WTC11 (cell line): ENCODE measurements at regions of chr16 and their contacts with region 1.

Region 1: DNA sequence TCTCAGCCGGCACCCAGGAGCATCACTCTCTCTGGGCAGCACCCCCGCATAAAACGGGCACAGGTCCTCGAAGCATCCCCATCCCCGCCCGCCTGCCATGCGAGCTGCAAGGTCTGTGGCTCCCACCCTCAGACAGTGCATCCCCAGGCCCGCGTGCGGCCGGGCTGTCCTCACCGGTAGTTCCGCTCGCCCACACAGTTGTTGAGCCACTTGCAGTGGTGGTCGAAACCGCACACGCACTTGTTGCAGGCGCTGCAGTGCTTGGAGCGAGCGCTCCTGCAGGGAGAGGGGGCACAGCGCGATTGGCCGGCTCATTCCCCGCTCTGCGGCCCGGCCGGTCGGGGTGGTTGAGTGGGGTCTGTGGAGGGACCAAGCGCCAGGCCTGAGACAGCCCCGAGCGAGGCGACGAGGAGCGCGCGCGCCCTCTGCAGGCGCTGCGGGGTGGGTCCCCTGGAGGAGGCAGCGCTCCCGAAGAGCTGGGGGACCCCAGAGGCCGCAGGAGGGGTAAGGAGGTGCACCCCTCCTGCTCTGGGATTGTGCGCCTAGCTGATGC is 6.0 kb upstream of the TPPP3 start:
- DNase-seq: peak; percentile 90
- ATAC-seq: peak; percentile 83
- H3K4me3 Mint-ChIP-seq: no peak overlapping the region
- H3K27ac Mint-ChIP-seq: no peak overlapping the region
- H3K4me1 Mint-ChIP-seq: peaks cover 26% of the 10 kb centered on the region
- H3K27me3 Mint-ChIP-seq: peaks cover 44% of the 10 kb centered on the region
- CTCF ChIP-seq: peak; percentile 80; the same call in 1 of the 2 replicates

Region 2: GRCh38 chr16:67260426-67261075 is 138.7 kb before region 1 on chr16:
- CTCF ChIA-PET with region 1: interaction called, 33 read pairs
- POLR2A ChIA-PET with region 1: no interaction called
- DNase-seq: no peak
- ATAC-seq: peak; percentile 67
- H3K4me3 Mint-ChIP-seq: no peak overlapping the region
- H3K27ac Mint-ChIP-seq: no peak overlapping the region
- H3K4me1 Mint-ChIP-seq: peaks cover 4% of the 10 kb centered on the region; the same call in 1 of the 2 replicates
- H3K27me3 Mint-ChIP-seq: no peaks in the 10 kb centered on the region
- CTCF ChIP-seq: no peak

Region 3: GRCh38 chr16:67326472-67327309 is 72.6 kb before region 1 on chr16 and contains the starts of genes KCTD19 and LRRC36:
- CTCF ChIA-PET with region 1: interaction called, 74 read pairs
- POLR2A ChIA-PET with region 1: interaction called, 3 read pairs
- DNase-seq: peak; percentile 98
- ATAC-seq: peak; percentile 99
- H3K4me3 Mint-ChIP-seq: peak within 1 kb of the TSS; percentile 83
- H3K27ac Mint-ChIP-seq: no peak within 1 kb of the TSS
- H3K4me1 Mint-ChIP-seq: peaks cover 3% of the 10 kb centered on the region
- H3K27me3 Mint-ChIP-seq: peaks cover 56% of the 10 kb centered on the region
- CTCF ChIP-seq: peak; percentile 49
- total RNA-seq, gene KCTD19: 0.85 to 1.1 TPM (median 0.85 TPM) in 3 replicates
- total RNA-seq, gene LRRC36: 0.13 to 0.39 TPM (median 0.18 TPM) in 3 replicates

Region 4: DNA sequence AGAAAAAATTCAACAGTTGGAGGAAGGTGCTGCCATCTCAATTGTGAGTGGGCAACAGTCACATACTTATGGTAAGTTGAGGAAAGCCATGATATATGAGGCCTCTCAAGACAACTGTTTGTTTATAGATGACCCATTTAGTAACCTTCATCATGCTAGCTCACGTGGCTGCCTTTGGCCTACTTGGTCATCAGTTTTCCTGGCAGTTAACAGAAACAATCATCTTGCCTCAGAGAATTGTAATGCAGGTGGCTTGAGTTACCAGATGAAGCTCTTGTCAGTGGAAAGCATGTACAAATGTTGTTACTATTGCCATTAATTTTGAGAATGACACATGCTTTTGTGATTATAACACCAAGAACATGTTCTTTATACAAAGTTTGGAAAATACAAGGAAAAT is 20.6 kb before region 1 on chr16:
- CTCF ChIA-PET with region 1: interaction called, 27 read pairs
- POLR2A ChIA-PET with region 1: no interaction called
- DNase-seq: no peak
- ATAC-seq: no peak
- H3K4me3 Mint-ChIP-seq: no peak overlapping the region
- H3K27ac Mint-ChIP-seq: no peak overlapping the region
- H3K4me1 Mint-ChIP-seq: no peaks in the 10 kb centered on the region; the same call in 1 of the 2 replicates
- H3K27me3 Mint-ChIP-seq: peaks cover 16% of the 10 kb centered on the region
- CTCF ChIP-seq: no peak

Region 5: DNA sequence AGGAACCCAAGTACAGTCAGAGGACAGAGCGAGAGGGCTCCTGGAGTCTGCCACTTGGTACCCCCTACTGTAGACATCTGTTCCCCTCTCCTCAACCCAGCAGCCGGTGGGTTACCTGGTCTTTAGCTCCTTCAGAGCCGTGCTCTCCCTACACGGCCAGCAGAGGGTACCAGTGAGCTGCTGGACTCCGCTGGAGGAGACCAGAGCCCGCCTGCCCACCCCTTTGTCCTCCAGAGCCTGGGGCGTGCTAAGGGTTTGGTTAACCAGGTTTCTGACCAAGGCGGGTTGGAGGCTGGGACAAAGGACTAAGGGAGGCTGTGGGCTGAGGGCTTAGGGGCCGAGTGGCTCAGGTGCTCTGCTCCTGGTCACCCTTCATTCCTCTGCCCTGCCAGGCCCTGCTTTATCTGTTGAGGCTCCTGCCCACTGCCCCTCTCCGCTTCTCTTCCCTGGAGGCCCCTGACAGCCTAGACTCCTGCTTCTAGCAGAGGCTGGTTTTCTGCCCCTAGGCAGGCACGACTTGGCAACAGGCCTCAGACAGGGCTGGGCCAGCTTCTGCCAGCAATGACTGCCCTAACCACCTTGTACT is 29.0 kb after region 1 on chr16:
- CTCF ChIA-PET with region 1: interaction called, 103 read pairs
- POLR2A ChIA-PET with region 1: no interaction called
- DNase-seq: peak; percentile 91
- ATAC-seq: peak; percentile 67
- H3K4me3 Mint-ChIP-seq: no peak overlapping the region
- H3K27ac Mint-ChIP-seq: no peak overlapping the region
- H3K4me1 Mint-ChIP-seq: peaks cover 77% of the 10 kb centered on the region
- H3K27me3 Mint-ChIP-seq: peaks cover 12% of the 10 kb centered on the region
- CTCF ChIP-seq: peak; percentile 80

Region 6: DNA sequence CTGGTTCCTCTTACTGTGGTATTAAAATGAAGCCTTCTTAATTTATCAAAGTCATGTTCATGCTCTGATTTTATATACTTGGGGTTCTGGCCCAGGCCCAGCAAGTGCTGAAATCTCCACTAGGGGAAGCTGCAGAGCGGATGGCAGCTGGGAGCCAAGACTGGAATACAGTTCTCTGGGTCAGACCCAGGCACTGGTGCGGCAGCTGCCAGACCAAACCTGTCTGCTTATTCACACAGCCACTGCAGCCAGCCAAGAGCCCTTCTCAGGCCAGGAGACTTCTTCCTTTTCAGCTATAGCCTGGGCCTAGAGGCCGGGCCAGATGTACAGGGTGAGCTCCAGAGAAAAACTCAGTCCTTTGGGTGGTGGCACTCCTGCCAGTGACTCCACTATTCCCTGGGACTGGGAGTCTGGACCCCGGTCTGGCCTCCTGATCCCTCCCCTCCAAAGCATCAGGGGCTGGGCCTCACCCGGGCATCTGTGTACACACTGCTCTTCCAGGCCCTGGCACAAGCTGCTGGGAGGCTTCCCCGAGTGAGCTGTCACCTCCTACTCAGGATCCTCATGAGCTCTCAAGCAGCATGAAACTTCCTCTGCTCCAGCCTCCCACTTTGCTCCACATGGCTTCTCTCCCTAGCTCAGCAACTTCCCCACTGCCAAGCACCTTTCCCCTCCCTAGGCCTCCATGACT is 57.3 kb after region 1 on chr16:
- CTCF ChIA-PET with region 1: interaction called, 10 read pairs
- POLR2A ChIA-PET with region 1: no interaction called
- DNase-seq: peak; percentile 61
- ATAC-seq: peak; percentile 83
- H3K4me3 Mint-ChIP-seq: no peak overlapping the region
- H3K27ac Mint-ChIP-seq: peak overlapping the region; percentile 46; the same call in 1 of the 2 replicates
- H3K4me1 Mint-ChIP-seq: 0 out of 2 replicates have a peak, but pooled peaks cover 5% of the 10 kb centered on the region
- H3K27me3 Mint-ChIP-seq: no peaks in the 10 kb centered on the region
- CTCF ChIP-seq: peak; percentile 44

Region 7: GRCh38 chr16:67480833-67481560 is 81.7 kb after region 1 on chr16 and contains the start of gene ATP6V0D1:
- CTCF ChIA-PET with region 1: interaction called, 10 read pairs
- POLR2A ChIA-PET with region 1: no interaction called
- DNase-seq: peak; percentile 99
- ATAC-seq: peak; percentile 95
- H3K4me3 Mint-ChIP-seq: peak within 1 kb of the TSS; percentile 98
- H3K27ac Mint-ChIP-seq: peak within 1 kb of the TSS; percentile 97
- H3K4me1 Mint-ChIP-seq: peaks cover 5% of the 10 kb centered on the region
- H3K27me3 Mint-ChIP-seq: peaks cover 36% of the 10 kb centered on the region
- CTCF ChIP-seq: peak; percentile 49; the same call in 1 of the 2 replicates
- total RNA-seq, gene ATP6V0D1: 32.5 to 44.1 TPM (median 33.8 TPM) in 3 replicates

Region 8: GRCh38 chr16:67697422-67698185 is 298.3 kb after region 1 on chr16:
- CTCF ChIA-PET with region 1: no interaction called
- POLR2A ChIA-PET with region 1: no interaction called
- DNase-seq: no peak
- ATAC-seq: no peak
- H3K4me3 Mint-ChIP-seq: no peak overlapping the region
- H3K27ac Mint-ChIP-seq: 0 out of 2 replicates have a peak overlapping the region, but pooled peaks have one; percentile 26
- H3K4me1 Mint-ChIP-seq: no peaks in the 10 kb centered on the region
- H3K27me3 Mint-ChIP-seq: no peaks in the 10 kb centered on the region
- CTCF ChIP-seq: no peak